ENCODE measurements at regions of chr9 and their contacts with region 1.

Region 1: GRCh38 chr9:98074115-98074990 is 17.8 kb downstream of the NANS start:
- DNase-seq: peak; percentile 64
- H3K4me3 ChIP-seq: no peak overlapping the region
- H3K27ac ChIP-seq: no peak overlapping the region
- H3K4me1 ChIP-seq: no peaks in the 10 kb centered on the region
- H3K27me3 ChIP-seq: no peaks in the 10 kb centered on the region
- CTCF ChIP-seq: peak; percentile 87 to 93
- POLR2A ChIP-seq: no peak

Region 2: GRCh38 chr9:97740848-97741821 is 333.2 kb before region 1 on chr9:
- CTCF ChIA-PET with region 1: no interaction called
- POLR2A ChIA-PET with region 1: no interaction called
- dilution Hi-C with region 1: no loop called
- intact Hi-C with region 1: loop called (anchors 1 kb)
- DNase-seq: peak; percentile 33
- H3K4me3 ChIP-seq: peak overlapping the region in 1 of 3 experiments; percentile 9
- H3K27ac ChIP-seq: no peak overlapping the region
- H3K4me1 ChIP-seq: peaks cover 4% of the 10 kb centered on the region
- H3K27me3 ChIP-seq: peaks cover 19 to 35% of the 10 kb centered on the region in 2 experiments
- CTCF ChIP-seq: peak in 1 of 2 donors; percentile 26
- POLR2A ChIP-seq: no peak

Region 3: GRCh38 chr9:98192503-98193335 is 118.4 kb after region 1 on chr9 and contains the start of gene CORO2A:
- CTCF ChIA-PET with region 1: no interaction called
- POLR2A ChIA-PET with region 1: no interaction called
- dilution Hi-C with region 1: no loop called
- intact Hi-C with region 1: loop called (anchors 5 kb)
- DNase-seq: peak; percentile 66
- H3K4me3 ChIP-seq: peak within 1 kb of the TSS; percentile 37 to 73 (median 59)
- H3K27ac ChIP-seq: no peak within 1 kb of the TSS
- H3K4me1 ChIP-seq: no peaks in the 10 kb centered on the region
- H3K27me3 ChIP-seq: no peaks in the 10 kb centered on the region
- CTCF ChIP-seq: peak; percentile 29 to 64
- POLR2A ChIP-seq: no peak
- total RNA-seq, gene CORO2A: 0.30 and 0.53 TPM in 2 replicates

Region 4: GRCh38 chr9:98255578-98256296 is 181.4 kb after region 1 on chr9 and contains the start of gene TBC1D2:
- CTCF ChIA-PET with region 1: interaction called, 7 read pairs
- POLR2A ChIA-PET with region 1: no interaction called
- dilution Hi-C with region 1: no loop called
- intact Hi-C with region 1: loop called (anchors 2 kb)
- DNase-seq: peak; percentile 94
- H3K4me3 ChIP-seq: peak within 1 kb of the TSS; percentile 67 to 81 (median 80)
- H3K27ac ChIP-seq: peak within 1 kb of the TSS; percentile 75
- H3K4me1 ChIP-seq: peaks cover 22% of the 10 kb centered on the region
- H3K27me3 ChIP-seq: no peaks in the 10 kb centered on the region
- CTCF ChIP-seq: peak in 1 of 2 donors; percentile 24
- POLR2A ChIP-seq: peak; percentile 64
- total RNA-seq, gene TBC1D2: 3.4 and 3.6 TPM in 2 replicates

Region 5: DNA sequence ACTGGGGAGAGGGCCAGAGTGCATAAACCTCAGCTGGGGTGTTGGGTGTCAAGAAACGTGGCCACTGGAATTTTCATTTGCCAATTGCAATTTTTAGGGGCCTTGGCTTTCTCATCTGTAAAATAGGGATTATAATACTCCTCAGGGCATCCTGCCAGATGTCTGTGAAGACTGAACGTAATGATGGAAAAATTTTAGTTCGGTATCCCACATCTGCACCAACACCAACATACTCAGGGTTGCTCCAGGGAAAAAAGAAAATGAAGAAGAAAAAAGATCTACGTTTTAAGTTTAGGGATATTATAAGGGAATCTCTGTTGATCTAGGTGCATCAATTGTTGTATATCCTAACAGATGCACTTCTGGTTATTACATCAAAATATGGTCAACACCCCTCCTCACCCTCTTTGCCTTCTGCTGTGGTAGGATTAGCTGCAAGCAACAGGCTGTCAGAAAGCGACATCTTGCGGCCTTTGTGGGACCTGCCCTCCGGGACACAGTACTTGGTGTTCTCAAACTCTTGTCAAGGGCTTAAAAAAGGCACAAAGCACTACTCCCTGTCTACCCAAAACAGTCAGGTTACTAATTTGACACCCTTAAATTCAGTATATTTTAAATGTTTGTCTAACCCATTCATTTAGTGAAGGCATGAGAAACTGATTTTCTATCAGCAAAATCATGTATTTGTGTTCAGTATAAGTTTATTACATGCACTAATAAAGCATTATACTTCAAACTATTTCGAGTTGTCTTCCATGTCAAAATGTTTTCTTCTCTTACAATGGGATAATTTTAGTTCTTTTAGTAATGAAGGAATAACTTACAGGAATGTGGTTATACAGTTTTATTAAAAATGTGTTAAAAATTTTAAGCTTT is 189.4 kb after region 1 on chr9:
- CTCF ChIA-PET with region 1: interaction called, 23 read pairs
- POLR2A ChIA-PET with region 1: no interaction called
- dilution Hi-C with region 1: no loop called
- intact Hi-C with region 1: loop called (anchors 1 kb)
- DNase-seq: peak; percentile 82
- H3K4me3 ChIP-seq: no peak overlapping the region
- H3K27ac ChIP-seq: no peak overlapping the region
- H3K4me1 ChIP-seq: no peaks in the 10 kb centered on the region
- H3K27me3 ChIP-seq: no peaks in the 10 kb centered on the region
- CTCF ChIP-seq: peak; percentile 90 to 92
- POLR2A ChIP-seq: no peak

Region 6: DNA sequence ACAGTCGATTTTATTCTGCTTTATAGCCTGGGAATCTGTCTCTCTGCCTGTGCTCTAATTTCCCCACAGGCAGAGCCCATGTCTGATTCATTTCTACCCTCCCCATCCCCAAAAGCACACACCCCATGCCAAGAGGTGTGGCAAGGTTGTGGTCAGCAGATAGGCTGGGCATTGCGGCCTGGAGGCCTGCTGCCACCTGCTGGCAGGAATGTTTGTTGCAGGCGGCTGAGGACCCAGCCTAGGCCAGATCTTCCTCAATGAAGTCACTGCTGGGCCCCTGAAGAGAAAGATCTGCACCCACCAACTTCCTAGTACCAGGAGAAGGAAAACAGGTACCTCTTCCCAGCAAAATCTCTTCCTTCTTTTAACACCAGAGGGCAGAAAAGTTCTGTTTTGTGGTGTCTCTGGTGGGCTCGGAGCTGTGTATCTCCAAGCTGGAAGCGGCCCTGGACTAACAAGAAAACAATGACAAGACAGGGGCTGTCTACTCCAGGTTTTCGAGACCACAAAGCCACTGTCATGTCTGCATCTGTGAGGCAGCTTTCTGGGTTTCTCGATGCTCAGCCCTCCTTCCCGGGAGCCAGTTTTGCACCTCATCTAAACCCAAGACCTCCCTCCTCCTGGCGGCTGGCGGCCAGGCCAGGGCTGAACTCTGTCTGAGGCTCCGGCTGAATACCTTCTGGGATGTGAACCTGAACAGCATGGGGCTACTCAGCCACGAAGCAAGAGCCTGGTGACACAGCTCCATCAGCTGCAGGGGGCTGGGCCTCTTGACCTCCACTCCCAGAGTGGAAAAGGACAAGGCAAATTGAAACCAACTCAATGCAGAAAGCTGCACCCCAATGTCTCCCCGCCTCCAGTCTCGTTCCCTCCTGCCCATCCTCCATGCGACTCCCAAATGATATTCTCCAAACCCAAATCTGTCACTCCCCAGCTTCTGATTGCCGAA is 717.1 kb after region 1 on chr9:
- CTCF ChIA-PET with region 1: no interaction called
- POLR2A ChIA-PET with region 1: no interaction called
- dilution Hi-C with region 1: no loop called
- intact Hi-C with region 1: loop called (anchors 5 kb)
- DNase-seq: peak; percentile 80
- H3K4me3 ChIP-seq: no peak overlapping the region
- H3K27ac ChIP-seq: no peak overlapping the region
- H3K4me1 ChIP-seq: peaks cover 16% of the 10 kb centered on the region
- H3K27me3 ChIP-seq: no peaks in the 10 kb centered on the region
- CTCF ChIP-seq: peak; percentile 96 to 98
- POLR2A ChIP-seq: no peak